Right ventricle myocardium superior (tissue), 1 donor: ENCODE measurements at regions of chr1 and their contacts with region 1.

Region 1: GRCh38 chr1:94801919-94802546 is 18.1 kb upstream of the SLC44A3 start:
- DNase-seq: peak; percentile 45
- ATAC-seq: peak; percentile 86

Region 2: GRCh38 chr1:94481473-94481933 is 320.5 kb before region 1 on chr1:
- intact Hi-C with region 1: loop called (anchors 5 kb)
- DNase-seq: no peak
- ATAC-seq: peak; percentile 92

Region 3: GRCh38 chr1:94522304-94522703 is 279.7 kb before region 1 on chr1:
- intact Hi-C with region 1: loop called (anchors 5 kb)
- DNase-seq: no peak
- ATAC-seq: peak; percentile 68

Region 4: GRCh38 chr1:94579876-94580294 is 222.1 kb before region 1 on chr1:
- intact Hi-C with region 1: no loop called
- DNase-seq: no peak
- ATAC-seq: no peak

Region 5: DNA sequence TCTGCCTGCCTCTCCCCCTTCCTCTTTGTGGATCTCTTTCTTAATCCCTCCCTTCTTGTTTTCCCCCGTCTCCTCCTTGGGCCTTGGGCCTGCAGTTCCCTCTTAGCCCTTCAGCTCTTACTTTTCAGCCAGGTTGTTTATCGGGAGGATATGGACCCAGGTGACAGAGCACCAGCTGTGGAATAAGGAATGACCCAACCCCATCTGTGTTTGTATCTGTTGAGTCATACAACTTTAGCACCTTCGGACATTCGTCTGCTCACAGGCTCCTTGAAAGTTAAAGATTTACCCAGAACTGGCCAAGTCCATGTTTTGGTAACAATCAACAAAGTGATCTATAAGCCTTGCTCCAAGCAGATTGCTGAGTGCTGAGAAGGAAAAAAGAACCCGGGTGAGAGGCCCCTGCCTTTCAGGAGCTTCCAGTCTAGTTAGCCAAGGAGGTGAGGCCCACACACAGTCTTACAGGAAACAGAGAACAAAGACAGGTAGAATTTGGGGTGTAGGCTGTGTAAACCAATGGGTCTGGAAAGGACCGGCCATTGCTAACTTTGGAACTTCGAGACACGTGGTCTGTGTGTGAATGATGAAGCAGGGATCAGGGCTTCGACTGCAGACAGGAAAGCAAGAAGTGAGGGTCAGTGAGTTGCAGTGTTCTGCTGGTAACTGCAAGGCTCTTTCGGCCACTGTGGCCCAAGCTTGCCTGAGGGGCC is 193.7 kb before region 1 on chr1:
- intact Hi-C with region 1: loop called (anchors 5 kb)
- DNase-seq: no peak
- ATAC-seq: no peak

Region 6: DNA sequence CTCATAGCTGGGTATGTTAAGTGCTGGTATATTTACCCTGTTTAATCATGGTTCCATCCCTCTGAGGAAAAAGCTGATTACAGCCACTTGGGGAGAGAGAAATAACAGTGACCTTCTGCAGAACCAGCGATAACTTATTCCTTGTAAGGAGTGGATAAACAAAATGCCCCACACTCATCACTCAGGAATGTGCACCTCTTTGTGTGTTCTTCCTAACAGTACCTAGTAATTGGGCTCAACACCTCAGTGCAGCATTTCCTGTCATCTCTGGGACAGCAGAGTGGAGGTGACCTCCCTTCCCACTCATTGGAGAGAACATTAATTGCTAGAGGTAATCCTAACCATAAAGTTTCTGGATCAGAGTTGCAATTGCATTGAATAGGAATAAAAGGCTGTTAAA is 148.0 kb before region 1 on chr1:
- intact Hi-C with region 1: loop called (anchors 10 kb)
- DNase-seq: no peak
- ATAC-seq: peak; percentile 2

Region 7: DNA sequence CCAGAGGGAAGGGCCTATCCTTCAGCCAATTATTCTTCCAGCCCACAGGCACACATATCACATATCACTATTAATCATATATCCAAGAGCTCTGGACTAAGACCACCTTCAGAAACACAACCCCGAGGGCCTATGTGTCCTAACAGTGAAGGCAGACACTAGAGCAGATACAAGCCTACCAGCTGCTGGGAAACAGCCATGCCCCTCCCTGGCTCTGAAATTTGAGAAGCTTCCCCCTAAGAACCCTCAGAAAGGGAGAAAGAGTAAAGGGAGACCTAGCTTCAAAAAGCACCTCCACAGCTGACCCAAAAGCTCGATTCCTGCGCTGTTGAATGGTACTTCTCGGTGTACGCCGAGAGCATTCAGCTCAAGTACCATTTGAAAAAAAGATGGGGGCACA is 107.5 kb after region 1 on chr1:
- intact Hi-C with region 1: no loop called
- DNase-seq: no peak
- ATAC-seq: peak; percentile 16